IMR-90 (cell line): ENCODE measurements at regions of chr4 and their contacts with region 1.

Region 1: GRCh38 chr4:122930862-122931261 is 8.5 kb upstream of the NUDT6 start:
- DNase-seq: peak; percentile 41
- ATAC-seq: no peak
- H3K4me3 ChIP-seq: no peak overlapping the region
- H3K27ac ChIP-seq: no peak overlapping the region
- H3K4me1 ChIP-seq: no peaks in the 10 kb centered on the region
- H3K27me3 ChIP-seq: no peaks in the 10 kb centered on the region
- CTCF ChIP-seq: peak; percentile 67
- POLR2A ChIP-seq: no peak
- RAD21 ChIP-seq: peak; percentile 60

Region 2: GRCh38 chr4:121938282-121939092 is 992.4 kb before region 1 on chr4:
- CTCF ChIA-PET with region 1: no interaction called
- POLR2A ChIA-PET with region 1: no interaction called
- dilution Hi-C with region 1: no loop called
- in situ Hi-C with region 1: no loop called
- intact Hi-C with region 1: loop called (anchors 10 kb)
- DNase-seq: peak; percentile 12
- ATAC-seq: no peak; the same call in 1 of the 2 replicates
- H3K4me3 ChIP-seq: no peak overlapping the region
- H3K27ac ChIP-seq: no peak overlapping the region
- H3K4me1 ChIP-seq: peaks cover 14% of the 10 kb centered on the region
- H3K27me3 ChIP-seq: no peaks in the 10 kb centered on the region
- CTCF ChIP-seq: no peak
- POLR2A ChIP-seq: no peak
- RAD21 ChIP-seq: no peak

Region 3: DNA sequence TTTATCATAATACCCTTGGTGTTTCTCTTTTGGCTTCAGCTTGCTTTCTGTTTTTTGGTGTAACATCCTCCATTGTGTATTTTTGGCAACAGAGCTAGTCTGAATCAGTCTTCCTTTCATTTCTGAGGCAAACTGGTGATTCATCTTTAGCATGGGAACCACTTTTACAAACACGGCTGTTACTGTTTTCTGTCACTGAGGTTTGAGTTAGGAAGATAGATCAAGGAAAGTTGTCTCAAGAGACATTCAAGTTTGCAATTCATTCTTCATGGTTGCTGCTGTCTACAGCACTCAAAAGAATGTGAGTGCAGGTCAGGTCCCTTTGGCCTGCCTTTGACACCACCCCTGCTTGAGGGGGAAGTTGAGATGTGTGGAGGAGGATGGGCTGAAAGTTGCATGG is 346.3 kb before region 1 on chr4:
- CTCF ChIA-PET with region 1: interaction called, 3 read pairs
- POLR2A ChIA-PET with region 1: no interaction called
- dilution Hi-C with region 1: no loop called
- in situ Hi-C with region 1: no loop called
- intact Hi-C with region 1: loop called (anchors 5 kb)
- DNase-seq: peak; percentile 82
- ATAC-seq: peak; percentile 53
- H3K4me3 ChIP-seq: no peak overlapping the region
- H3K27ac ChIP-seq: no peak overlapping the region
- H3K4me1 ChIP-seq: peaks cover 10% of the 10 kb centered on the region
- H3K27me3 ChIP-seq: no peaks in the 10 kb centered on the region
- CTCF ChIP-seq: no peak
- POLR2A ChIP-seq: no peak
- RAD21 ChIP-seq: no peak

Region 4: DNA sequence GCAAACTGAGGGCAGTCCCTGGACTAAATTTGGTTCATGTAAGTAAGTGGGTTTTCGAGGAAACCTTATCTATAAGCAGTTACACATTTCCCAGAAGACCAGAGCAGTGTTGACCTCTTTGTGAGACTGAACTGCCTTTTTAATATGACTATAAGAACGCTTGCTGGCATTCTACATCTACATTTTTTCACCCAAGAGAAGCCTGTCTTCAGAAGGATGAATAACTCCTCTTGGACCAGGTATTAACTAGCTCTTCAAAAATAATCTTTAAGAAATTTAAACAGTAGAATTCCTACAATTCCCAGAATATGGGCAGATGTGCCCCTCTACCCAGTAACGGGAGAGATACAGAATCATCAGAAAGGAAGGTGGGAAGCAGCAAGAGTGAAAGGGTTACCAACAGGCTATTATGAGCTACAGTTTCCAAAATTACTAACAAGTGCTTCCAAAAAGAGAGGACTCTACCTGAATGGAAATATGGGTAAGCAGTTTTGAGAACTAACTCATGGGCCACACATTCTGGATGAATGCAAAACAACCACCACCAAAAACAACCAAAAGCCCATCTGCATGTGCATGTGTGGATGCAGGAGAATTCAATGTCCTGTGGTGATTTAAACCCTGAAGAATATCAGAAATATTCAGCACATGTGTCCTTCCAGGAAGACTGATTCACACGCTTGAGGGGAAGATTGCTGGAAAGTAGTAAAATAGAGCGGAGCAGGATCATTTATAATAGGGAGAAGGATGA is 181.0 kb before region 1 on chr4:
- CTCF ChIA-PET with region 1: no interaction called
- POLR2A ChIA-PET with region 1: no interaction called
- dilution Hi-C with region 1: no loop called
- in situ Hi-C with region 1: loop called (anchors 5 kb)
- intact Hi-C with region 1: no loop called
- DNase-seq: no peak
- ATAC-seq: no peak
- H3K4me3 ChIP-seq: no peak overlapping the region
- H3K27ac ChIP-seq: no peak overlapping the region
- H3K4me1 ChIP-seq: no peaks in the 10 kb centered on the region
- H3K27me3 ChIP-seq: no peaks in the 10 kb centered on the region
- CTCF ChIP-seq: no peak
- POLR2A ChIP-seq: no peak
- RAD21 ChIP-seq: no peak